Cardiac septum (tissue), 1 donor: ENCODE measurements at regions of chr16 and their contacts with region 1.

Region 1: GRCh38 chr16:28823872-28824716 is 1.3 kb downstream of the ATXN2L start:
- DNase-seq: peak; percentile 97

Region 2: DNA sequence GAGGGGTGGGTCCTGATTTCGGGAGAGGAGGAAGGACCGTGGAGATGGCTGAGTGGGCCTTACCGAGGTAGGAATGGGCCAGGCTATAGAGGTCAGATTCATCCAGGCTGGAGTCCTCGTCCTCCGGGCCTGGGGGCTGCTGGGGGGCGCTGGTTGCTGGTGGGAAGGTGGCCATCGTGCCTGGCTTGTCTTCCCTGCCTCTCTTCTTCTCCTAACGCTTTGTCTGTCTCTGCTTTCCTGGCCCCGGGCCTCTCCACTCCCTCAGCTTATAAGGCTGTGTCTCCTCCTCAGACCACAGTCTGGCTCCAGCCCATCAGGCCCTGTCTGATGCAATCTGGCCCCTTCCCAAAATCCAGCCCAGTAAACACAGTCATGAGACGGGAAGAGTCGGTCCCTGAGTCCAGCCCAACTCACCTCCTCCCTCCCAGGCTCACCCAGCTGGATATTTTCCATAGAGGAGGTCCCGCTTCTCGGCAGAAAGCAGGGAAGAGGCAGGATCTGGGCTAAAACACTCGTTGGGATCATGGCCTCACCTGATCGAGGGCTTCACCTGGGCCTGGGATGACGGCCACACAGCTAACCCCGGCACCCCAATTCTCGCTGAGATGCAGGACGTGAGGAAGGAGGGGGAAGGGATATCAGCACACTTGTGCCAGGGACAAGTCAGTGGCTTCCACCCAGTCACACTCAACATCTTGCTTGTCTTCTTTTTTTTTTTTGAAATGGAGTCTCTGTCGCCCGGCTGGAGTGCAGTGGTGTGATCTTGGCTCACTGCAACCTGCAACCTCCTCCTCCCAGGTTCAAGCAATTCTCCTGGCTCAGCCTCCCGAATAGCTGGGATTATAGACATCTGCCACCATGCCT is 285.1 kb before region 1 on chr16 and contains the start of gene NUPR1:
- intact Hi-C with region 1: loop called (anchors 5 kb)
- DNase-seq: peak; percentile 91
- total RNA-seq, gene NUPR1: 50.2 TPM

Region 3: GRCh38 chr16:28575446-28576109 is 248.5 kb before region 1 on chr16:
- intact Hi-C with region 1: no loop called
- DNase-seq: no peak

Region 4: GRCh38 chr16:28863929-28864793 is 40.1 kb after region 1 on chr16:
- intact Hi-C with region 1: loop called (anchors 2 kb)
- DNase-seq: no peak

Region 5: GRCh38 chr16:28943281-28943680 is 119.2 kb after region 1 on chr16:
- intact Hi-C with region 1: loop called (anchors 5 kb)
- DNase-seq: no peak

Region 6: DNA sequence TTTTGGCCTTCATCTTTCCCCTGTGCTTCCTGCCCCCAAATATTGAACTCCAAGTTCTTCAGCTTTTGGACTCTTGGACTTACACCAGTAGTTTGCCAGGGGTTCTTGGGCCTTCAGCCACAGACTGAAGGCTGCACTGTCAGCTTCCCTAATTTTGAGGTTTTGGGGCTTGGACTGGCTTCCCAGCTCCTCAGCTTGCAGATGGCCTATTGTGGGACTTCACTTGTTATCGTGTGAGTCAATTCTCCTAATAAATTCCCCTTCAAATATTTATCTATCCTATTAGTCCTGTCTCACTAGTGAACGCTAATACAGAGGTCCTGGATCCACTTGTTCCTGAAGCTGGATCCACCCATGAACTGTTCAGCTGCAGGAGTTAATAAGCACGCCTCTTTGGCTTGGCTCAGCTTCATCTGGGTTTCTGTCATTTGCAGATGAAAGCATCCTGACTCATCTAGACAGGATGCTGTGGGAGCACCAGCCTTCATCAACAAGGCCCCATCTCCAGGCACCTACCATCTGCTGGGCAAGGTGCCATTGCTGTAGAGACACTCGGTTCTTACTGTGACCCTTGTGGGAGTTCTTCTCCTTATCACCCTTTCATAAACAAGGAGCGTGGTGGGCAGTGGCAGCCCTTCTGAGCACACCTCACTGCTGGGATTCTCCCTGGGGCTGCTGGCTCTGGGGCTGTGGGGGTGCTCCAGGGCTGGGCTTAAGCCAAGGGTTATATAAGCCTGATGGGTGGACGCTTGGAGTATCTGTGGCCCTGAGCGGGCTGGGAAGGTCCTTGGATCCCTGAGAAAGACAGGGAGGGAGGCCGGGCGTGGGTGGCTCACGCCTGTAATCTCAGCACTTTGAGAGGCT is 183.9 kb after region 1 on chr16:
- intact Hi-C with region 1: no loop called
- DNase-seq: no peak